Adrenal gland (tissue), 19 donors: ENCODE measurements at regions of chr12 and their contacts with region 1.

Region 1: GRCh38 chr12:89524541-89525285 is at the start of gene GALNT4:
- DNase-seq: peak; percentile 86 to 92 (median 89)
- H3K4me3 ChIP-seq: peak within 1 kb of the TSS; percentile 2 to 94 (median 80)
- H3K27ac ChIP-seq: peak within 1 kb of the TSS; percentile 51 to 91 (median 88)
- H3K4me1 ChIP-seq: peaks cover 4 to 38% of the 10 kb centered on the region in 2 donors
- H3K27me3 ChIP-seq: no peaks in the 10 kb centered on the region
- CTCF ChIP-seq: peak; percentile 49 to 82 (median 66)
- POLR2A ChIP-seq: peak; percentile 43 to 77
- total RNA-seq, gene GALNT4: 3.6 to 7.2 (median 5.8) TPM

Region 2: DNA sequence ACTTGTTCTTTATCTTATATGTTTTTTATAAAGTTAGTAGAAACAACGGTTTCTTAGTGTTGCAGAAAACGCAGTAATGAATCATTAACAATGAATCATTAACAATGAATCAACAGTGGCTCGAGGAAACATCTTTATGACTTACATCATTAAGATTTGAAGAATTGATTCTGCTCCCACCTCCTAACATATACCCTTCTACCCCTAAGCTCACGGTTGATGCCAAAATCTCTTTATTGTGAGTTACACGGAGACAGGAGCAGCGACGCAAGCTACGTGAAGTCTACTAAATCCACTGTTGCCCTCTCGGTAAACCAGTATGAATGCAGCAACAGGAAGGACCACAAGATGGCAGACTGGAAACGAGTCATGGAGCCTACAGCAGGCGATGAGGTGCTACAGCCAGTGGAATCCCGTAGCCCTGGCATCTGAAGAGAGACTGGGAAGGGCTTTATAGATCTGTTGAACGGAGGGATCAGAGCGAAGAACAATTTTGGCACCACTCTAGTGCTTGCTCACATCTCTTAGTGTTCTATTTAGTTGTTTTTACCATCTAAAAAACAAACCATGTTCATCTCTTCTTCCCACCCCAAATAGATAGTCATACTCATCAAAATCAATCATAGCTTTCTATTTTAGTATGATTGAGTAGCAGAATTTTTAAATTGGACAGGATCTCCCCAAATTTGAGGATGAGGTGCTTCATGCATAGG is 505.1 kb before region 1 on chr12:
- intact Hi-C with region 1: loop called (anchors 5 to 10 kb)
- DNase-seq: peak; percentile 73 to 94 (median 81)
- H3K4me3 ChIP-seq: peak overlapping the region in 1 of 4 donors; percentile 51
- H3K27ac ChIP-seq: no peak overlapping the region
- H3K4me1 ChIP-seq: peaks cover 0 to 14% of the 10 kb centered on the region in 2 donors
- H3K27me3 ChIP-seq: no peaks in the 10 kb centered on the region
- CTCF ChIP-seq: peak; percentile 67 to 91 (median 84)
- POLR2A ChIP-seq: no peak

Region 3: GRCh38 chr12:89236748-89237388 is 287.8 kb before region 1 on chr12:
- intact Hi-C with region 1: no loop called
- DNase-seq: no peak
- H3K4me3 ChIP-seq: no peak overlapping the region
- H3K27ac ChIP-seq: no peak overlapping the region
- H3K4me1 ChIP-seq: peaks cover 11 to 14% of the 10 kb centered on the region in 2 donors
- H3K27me3 ChIP-seq: no peaks in the 10 kb centered on the region
- CTCF ChIP-seq: no peak
- POLR2A ChIP-seq: no peak

Region 4: GRCh38 chr12:89470741-89471509 is 53.8 kb before region 1 on chr12:
- intact Hi-C with region 1: loop called (anchors 5 to 10 kb)
- DNase-seq: no peak
- H3K4me3 ChIP-seq: no peak overlapping the region
- H3K27ac ChIP-seq: no peak overlapping the region
- H3K4me1 ChIP-seq: no peaks in the 10 kb centered on the region
- H3K27me3 ChIP-seq: no peaks in the 10 kb centered on the region
- CTCF ChIP-seq: peak; percentile 31 to 73 (median 64)
- POLR2A ChIP-seq: no peak

Region 5: DNA sequence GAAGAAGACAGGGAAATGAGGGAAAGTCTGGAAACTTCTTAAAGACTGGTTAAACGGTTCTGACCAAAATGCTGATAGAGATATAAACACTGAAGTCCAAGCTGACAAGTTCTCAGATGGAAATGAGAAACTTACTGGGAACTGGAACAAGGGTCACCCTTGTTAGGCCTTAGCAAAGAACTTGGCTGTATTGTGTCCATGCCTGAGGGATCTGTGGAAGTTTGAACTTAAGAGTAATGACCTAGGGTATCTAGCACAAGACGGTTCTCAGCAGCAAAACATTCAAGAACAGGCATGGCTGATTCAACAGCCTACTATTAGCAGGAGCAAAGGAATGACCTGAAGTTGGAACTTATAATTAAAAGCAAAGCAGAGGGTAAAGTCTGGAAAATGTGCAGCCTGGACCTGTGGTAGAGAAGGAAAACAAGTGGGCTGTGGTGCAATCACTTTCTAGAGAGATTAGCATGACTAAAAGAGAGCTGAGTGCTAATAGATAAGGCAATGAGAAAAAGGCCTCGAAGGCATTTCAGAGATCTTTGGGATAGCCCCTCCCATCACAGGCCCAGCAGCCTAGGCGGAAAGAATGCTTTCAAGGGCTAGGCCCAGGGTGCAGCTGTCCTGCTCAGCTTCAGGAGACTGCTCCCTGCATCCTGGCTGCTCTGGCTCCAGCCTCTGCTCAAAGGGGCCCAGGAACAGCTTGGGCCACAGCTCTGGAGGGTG is 123.7 kb after region 1 on chr12:
- intact Hi-C with region 1: no loop called
- DNase-seq: no peak
- H3K4me3 ChIP-seq: no peak overlapping the region
- H3K27ac ChIP-seq: no peak overlapping the region
- H3K4me1 ChIP-seq: no peaks in the 10 kb centered on the region
- H3K27me3 ChIP-seq: no peaks in the 10 kb centered on the region
- CTCF ChIP-seq: no peak
- POLR2A ChIP-seq: no peak